AG04449 (cell line): ENCODE measurements at regions of chr16 and their contacts with region 1.

Region 1: GRCh38 chr16:68843482-68844210 is at the start of gene TANGO6:
- DNase-seq: no peak
- H3K4me3 ChIP-seq: peak within 1 kb of the TSS; percentile 86
- CTCF ChIP-seq: peak; percentile 50

Region 2: DNA sequence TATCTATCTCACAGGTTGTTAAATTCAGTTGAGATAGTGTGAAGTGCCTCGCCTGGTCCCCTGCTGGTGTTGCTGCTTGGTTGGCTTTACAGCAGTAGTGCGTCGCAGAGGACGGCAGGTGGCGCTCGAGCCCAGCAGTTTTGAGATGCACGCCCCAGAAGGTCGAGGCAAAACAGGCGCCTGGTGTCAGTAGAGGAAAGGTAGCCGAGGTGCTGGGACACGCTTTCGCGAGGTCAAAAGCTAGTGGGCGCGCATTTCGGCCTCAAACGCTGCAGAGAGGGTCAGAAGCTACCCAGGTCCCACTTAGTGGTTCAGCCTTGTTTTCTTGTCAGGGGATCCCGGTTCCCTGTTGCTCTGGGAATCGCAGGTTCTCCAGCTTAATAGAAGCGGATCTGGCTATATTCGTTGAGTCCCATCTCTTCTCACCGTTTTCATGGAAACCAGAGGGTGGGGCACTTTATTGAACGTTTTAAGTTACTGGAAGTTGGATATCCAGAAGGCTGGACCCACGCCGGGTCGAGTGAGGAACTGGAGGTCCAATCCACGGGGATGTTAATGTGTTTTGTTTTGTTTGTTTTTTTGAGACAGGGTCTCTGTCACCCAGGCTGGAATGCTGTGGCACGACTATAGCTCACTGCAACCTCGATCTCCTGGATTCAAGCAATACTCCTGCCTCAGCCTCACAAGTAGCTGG is 314.8 kb before region 1 on chr16:
- CTCF ChIA-PET with region 1: interaction called, 19 read pairs
- POLR2A ChIA-PET with region 1: no interaction called
- DNase-seq: no peak
- H3K4me3 ChIP-seq: peak overlapping the region; percentile 32
- CTCF ChIP-seq: peak; percentile 97

Region 3: GRCh38 chr16:68548947-68549346 is 294.7 kb before region 1 on chr16:
- CTCF ChIA-PET with region 1: no interaction called
- POLR2A ChIA-PET with region 1: no interaction called
- DNase-seq: no peak
- H3K4me3 ChIP-seq: no peak overlapping the region
- CTCF ChIP-seq: no peak

Region 4: DNA sequence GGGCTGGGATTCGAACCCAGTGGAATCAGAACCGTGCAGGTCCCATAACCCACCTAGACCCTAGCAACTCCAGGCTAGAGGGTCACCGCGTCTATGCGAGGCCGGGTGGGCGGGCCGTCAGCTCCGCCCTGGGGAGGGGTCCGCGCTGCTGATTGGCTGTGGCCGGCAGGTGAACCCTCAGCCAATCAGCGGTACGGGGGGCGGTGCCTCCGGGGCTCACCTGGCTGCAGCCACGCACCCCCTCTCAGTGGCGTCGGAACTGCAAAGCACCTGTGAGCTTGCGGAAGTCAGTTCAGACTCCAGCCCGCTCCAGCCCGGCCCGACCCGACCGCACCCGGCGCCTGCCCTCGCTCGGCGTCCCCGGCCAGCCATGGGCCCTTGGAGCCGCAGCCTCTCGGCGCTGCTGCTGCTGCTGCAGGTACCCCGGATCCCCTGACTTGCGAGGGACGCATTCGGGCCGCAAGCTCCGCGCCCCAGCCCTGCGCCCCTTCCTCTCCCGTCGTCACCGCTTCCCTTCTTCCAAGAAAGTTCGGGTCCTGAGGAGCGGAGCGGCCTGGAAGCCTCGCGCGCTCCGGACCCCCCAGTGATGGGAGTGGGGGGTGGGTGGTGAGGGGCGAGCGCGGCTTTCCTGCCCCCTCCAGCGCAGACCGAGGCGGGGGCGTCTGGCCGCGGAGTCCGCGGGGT is 106.5 kb before region 1 on chr16 and contains the start of gene CDH1:
- CTCF ChIA-PET with region 1: no interaction called
- POLR2A ChIA-PET with region 1: no interaction called
- DNase-seq: no peak
- H3K4me3 ChIP-seq: no peak within 1 kb of the TSS
- CTCF ChIP-seq: no peak

Region 5: DNA sequence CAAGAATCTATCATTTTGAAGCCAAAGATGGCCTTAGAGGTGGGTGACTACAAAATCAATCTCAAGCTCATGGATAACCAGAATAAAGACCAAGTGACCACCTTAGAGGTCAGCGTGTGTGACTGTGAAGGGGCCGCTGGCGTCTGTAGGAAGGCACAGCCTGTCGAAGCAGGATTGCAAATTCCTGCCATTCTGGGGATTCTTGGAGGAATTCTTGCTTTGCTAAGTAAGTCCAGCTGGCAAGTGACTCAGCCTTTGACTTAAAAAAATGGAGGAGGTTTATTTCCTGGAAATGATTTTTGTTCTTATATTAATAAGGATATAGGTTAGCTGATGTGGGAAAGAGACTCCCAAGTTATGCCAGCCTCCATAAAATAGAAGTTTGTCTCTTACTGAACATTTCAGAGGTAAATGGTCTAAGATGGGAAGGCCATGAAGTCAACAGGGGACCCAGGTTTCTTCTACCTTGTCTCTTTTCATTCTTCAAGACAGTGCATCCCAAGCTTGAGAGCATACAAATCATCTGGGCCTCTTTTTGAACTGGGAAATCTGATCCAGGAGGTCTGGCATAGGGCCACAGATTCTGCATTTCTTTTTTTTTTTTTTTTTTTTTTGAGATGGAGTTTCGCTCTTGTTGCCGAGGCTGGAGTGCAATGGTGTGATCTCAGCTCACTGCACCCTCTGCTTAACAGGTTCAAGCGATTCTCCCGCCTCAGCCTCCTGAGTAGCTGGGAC is 20.1 kb before region 1 on chr16:
- CTCF ChIA-PET with region 1: interaction called, 17 read pairs
- POLR2A ChIA-PET with region 1: no interaction called
- DNase-seq: peak; percentile 83
- H3K4me3 ChIP-seq: no peak overlapping the region; the same call in 1 of the 2 replicates
- CTCF ChIP-seq: no peak

Region 6: DNA sequence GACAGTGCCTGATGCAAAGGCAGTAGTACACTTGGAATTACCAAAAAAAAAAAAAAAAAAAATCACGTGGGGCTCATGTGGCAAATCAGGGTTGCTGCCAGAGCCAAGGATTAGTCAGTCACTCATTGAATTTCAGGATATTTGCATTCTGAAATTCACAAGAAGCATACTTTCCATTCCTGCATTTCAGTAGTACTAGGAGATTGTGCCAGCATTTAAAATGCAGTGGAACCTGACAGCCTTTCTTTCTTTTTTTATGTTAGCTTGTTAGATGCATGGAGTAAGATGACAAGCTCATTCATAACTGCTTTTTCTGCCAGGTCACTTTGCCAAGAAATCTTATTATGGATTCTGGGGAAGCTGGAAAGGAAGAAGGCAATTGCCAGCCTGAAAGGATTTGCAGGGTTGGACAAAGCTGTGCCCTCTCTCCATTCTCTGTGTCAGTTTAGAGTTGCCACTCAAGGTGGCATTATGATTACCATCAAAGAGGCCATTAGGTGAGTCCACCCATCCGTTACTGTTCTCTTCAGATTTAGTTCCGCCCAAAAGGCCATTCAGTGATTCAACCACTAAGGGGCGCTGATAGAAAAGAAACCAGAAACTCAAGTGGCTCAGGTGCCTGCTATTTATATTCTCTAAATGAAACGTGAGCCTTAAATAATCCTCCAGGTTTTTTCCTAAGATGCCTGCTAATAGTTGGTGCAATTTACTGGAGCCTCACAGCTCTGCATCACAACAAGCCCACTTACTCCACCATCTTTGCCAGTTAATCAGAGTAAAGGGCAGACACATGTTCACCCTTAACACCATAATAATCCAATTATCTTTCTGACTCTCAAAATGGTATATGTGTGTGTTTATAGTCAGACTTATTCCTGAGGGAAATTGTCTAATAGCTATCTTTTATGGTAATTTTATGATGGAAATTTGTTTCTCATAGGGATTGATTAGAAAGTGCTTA is 58.6 kb after region 1 on chr16:
- CTCF ChIA-PET with region 1: interaction called, 21 read pairs
- POLR2A ChIA-PET with region 1: no interaction called
- DNase-seq: peak; percentile 46
- H3K4me3 ChIP-seq: no peak overlapping the region
- CTCF ChIP-seq: peak; percentile 53

Region 7: GRCh38 chr16:69019811-69020210 is 176.2 kb after region 1 on chr16:
- CTCF ChIA-PET with region 1: no interaction called
- POLR2A ChIA-PET with region 1: no interaction called
- DNase-seq: no peak
- H3K4me3 ChIP-seq: no peak overlapping the region
- CTCF ChIP-seq: no peak

Region 8: DNA sequence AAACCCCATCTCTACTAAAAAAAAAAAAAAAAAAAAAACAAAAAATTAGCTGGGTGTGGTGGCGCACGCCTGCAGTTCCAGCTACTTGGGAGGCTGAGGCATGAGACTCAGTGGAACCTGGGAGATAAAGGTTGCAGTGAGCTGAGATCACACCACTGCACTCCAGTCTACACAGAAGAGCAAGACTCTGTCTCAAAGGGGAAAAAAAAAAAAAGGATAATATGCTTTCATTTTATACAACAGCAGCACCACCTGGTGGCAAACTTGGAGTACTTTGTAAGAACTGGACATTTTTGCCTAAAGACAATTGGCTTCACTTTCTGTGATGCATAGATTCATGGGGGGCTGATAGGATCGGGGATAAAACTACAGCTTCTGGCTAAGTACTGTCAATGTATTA is 280.3 kb after region 1 on chr16:
- CTCF ChIA-PET with region 1: interaction called, 303 read pairs
- POLR2A ChIA-PET with region 1: interaction called, 5 read pairs
- DNase-seq: no peak
- H3K4me3 ChIP-seq: no peak overlapping the region
- CTCF ChIP-seq: peak; percentile 52